ENCODE measurements at regions of chr1 and their contacts with region 1.

Region 1: DNA sequence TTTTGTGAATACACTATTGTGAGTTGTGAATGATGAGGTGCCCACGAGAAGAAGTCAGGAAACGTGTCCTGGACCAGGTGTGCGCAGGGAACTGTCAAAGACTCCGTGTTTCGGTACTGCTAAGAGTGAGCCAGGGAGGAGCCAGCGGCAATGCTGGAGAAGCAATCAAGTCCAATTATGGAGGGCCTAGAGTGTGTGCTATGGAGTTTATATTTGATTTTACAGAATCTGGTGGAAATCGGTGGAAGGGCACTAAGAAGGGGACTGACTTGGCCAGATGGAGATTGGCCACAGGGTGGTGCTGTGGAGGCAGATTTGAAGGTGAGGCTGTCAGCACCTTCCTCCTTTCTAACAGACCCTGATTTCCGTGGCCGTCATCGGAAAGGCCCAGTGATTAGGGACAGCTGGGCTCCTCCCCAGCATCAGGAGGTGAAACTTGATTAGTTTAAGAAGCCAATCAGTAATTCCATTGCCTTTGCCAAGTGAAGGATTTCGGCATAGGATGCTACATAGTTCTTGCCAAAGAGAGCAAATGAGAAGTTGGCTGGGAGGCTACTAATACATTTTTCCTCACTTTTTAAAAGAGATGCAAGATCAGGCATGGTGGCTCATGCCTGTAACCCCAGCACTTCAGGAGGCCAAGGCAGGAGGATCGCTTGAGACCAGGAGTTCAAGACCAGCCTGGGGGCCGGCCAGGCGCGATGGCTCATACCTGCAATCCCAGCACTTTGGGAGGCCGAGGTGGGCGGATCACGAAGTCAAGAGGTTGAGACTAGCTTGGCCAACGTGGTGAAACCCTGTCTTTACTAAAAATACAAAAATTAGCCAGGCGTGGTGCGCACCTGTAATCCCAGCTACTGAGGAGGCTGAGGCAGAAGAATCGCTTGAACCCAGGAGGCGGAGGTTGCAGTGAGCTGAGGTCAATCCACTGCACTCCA is 7.0 kb downstream of the PTCH2 start:
- DNase-seq: peak; percentile 86 to 91 (median 89)
- H3K4me3 ChIP-seq: peak overlapping the region in 1 of 3 donors; percentile 17
- H3K27ac ChIP-seq: no peak overlapping the region
- H3K4me1 ChIP-seq: peaks cover 0 to 2% (median 0%) of the 10 kb centered on the region in 3 donors
- H3K27me3 ChIP-seq: no peaks in the 10 kb centered on the region
- CTCF ChIP-seq: peak; percentile 79

Region 2: DNA sequence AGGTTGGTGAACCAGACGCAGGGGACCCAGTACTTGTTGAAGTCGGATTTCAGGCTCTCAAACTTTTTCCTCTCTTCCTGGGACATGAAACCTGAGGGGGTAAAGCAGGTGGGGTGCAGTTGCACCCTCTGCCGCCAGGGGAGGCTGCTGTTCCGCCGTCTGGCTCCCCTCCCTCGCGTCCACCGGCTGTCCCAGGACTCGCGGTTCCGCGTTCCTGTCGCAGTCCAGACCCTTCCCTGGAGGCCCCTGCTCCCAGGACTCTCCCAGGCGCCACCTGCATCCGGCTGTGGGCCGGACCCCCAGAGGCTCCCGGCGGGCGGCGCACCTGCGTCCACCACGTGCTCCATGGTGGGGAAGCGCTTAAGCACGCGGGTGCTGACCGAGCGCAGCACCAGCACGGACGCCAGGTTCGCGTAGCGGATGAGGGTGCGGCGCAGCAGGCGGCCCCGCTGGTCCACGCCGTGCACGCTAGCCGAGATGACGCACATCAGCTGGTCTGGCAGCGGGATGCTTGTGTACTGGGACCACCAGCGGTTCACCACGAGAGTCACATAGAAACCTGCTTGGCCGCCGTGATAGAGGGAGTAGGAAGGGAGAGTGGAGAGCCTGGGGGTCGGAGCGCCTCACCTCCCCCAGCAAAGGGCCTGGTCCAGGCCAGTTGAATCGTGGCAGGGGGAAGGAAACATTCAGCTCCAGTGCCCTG is 49.7 kb before region 1 on chr1:
- intact Hi-C with region 1: loop called (anchors 10 kb)
- DNase-seq: peak; percentile 89 to 94 (median 91)
- H3K4me3 ChIP-seq: peak overlapping the region; percentile 19 to 54 (median 26)
- H3K27ac ChIP-seq: peak overlapping the region; percentile 1 to 60
- H3K4me1 ChIP-seq: peaks cover 0 to 23% (median 8%) of the 10 kb centered on the region in 3 donors
- H3K27me3 ChIP-seq: no peaks in the 10 kb centered on the region
- CTCF ChIP-seq: peak; percentile 92

Region 3: GRCh38 chr1:44926311-44926781 is 90.3 kb after region 1 on chr1:
- intact Hi-C with region 1: no loop called
- DNase-seq: no peak
- H3K4me3 ChIP-seq: no peak overlapping the region
- H3K27ac ChIP-seq: no peak overlapping the region
- H3K4me1 ChIP-seq: no peaks in the 10 kb centered on the region
- H3K27me3 ChIP-seq: no peaks in the 10 kb centered on the region
- CTCF ChIP-seq: no peak

Measured in kidney (tissue), 22 donors.